ENCODE measurements at regions of chr15 and their contacts with region 1.

Region 1: DNA sequence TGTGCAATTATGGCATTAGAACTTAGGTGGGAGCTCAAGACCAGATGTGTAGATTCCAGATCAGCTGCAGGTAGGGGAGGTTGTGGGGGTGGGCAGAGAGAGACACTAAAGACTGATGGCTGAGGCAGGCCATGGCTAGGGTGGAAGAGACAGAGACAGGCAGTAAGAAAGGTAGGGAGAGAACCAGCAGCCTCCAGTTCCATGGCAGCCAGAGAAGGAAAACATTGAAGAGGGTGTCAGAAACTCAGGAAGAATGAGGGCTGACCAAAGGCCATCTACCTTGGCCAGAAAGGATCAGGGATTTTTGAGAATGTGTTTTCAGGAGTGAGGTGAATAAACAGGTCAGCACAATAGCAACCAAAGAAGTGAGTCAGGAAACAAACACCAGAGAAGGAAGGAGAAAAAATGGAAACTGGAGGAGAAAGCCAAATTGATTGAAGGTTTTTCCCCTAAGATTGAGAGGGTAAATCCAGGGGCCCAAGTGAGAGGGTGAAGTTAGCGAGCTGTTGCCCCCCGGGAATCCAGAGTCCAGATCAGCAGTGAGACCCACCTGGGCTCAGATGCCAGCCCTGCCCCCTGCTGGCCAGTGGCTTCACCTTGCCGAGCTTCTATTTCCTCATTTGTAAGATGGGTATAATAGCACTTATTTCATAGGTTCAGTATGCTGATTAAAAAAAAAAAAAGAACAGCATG is 41.0 kb downstream of the ABHD2 start:
- DNase-seq: no peak
- H3K4me3 ChIP-seq: no peak overlapping the region
- H3K27ac ChIP-seq: peak overlapping the region; percentile 22 to 47 (median 38)
- H3K4me1 ChIP-seq: peaks cover 0 to 31% (median 9%) of the 10 kb centered on the region in 3 donors
- H3K27me3 ChIP-seq: no peaks in the 10 kb centered on the region
- CTCF ChIP-seq: peak; percentile 14 to 80 (median 72)
- POLR2A ChIP-seq: no peak

Region 2: GRCh38 chr15:89030311-89030710 is 99.0 kb before region 1 on chr15:
- intact Hi-C with region 1: no loop called
- DNase-seq: no peak
- H3K4me3 ChIP-seq: no peak overlapping the region
- H3K27ac ChIP-seq: no peak overlapping the region
- H3K4me1 ChIP-seq: no peaks in the 10 kb centered on the region
- H3K27me3 ChIP-seq: no peaks in the 10 kb centered on the region
- CTCF ChIP-seq: no peak
- POLR2A ChIP-seq: no peak

Region 3: DNA sequence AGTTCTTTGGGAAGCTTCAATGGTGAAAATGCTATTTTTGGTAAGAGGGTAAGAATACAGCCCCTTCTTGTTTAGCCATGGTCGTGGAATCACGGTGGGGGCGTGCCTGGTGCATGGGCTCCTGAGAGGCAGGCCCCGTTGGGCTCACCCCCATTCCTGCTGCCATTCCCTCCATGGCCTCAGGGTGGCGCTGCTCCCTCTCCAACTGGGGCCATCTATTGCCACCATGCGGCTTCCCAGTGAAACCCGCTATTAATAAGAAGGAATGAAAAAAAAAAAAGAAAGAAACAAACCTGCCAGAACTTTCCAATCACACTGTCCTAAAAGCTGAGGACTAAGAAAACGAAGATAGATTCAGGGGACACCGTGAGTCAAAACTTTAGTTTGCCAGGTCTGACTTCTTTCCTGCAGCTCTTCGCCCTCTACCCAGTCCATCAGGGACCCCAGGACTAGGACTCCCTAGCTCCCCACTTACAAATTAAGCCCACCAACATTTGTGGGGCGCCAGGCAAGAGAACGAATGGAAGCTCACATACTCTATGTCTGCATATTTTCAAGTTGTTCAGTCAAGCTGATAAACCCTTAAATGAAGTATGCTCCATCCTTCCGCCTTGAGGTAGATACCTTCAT is 71.7 kb before region 1 on chr15:
- intact Hi-C with region 1: loop called (anchors 5 kb)
- DNase-seq: peak; percentile 6
- H3K4me3 ChIP-seq: no peak overlapping the region
- H3K27ac ChIP-seq: peak overlapping the region in 1 of 4 donors; percentile 14
- H3K4me1 ChIP-seq: peaks cover 0 to 22% (median 7%) of the 10 kb centered on the region in 3 donors
- H3K27me3 ChIP-seq: no peaks in the 10 kb centered on the region
- CTCF ChIP-seq: peak; percentile 94 to 99 (median 98)
- POLR2A ChIP-seq: no peak